Panc1 (cell line): ENCODE measurements at regions of chr9 and their contacts with region 1.

Region 1: GRCh38 chr9:25850803-25851202 is 172.6 kb upstream of the TUSC1 start:
- DNase-seq: no peak
- ATAC-seq: no peak
- H3K4me3 ChIP-seq: no peak overlapping the region
- H3K27ac ChIP-seq: no peak overlapping the region
- H3K4me1 ChIP-seq: no peaks in the 10 kb centered on the region
- H3K27me3 ChIP-seq: no peaks in the 10 kb centered on the region
- CTCF ChIP-seq: no peak

Region 2: GRCh38 chr9:24342457-24342856 is 1508.3 kb before region 1 on chr9:
- CTCF ChIA-PET with region 1: no interaction called
- POLR2A ChIA-PET with region 1: interaction called, 11 read pairs
- in situ Hi-C with region 1: no loop called
- intact Hi-C with region 1: no loop called
- DNase-seq: no peak
- ATAC-seq: no peak
- H3K4me3 ChIP-seq: no peak overlapping the region
- H3K27ac ChIP-seq: no peak overlapping the region
- H3K4me1 ChIP-seq: no peaks in the 10 kb centered on the region
- H3K27me3 ChIP-seq: no peaks in the 10 kb centered on the region
- CTCF ChIP-seq: no peak